ENCODE measurements at regions of chr2 and their contacts with region 1.

Region 1: GRCh38 chr2:84817239-84817655 is 63.6 kb downstream of the TRABD2A start:
- DNase-seq: no peak
- ATAC-seq: no peak
- H3K4me3 ChIP-seq: no peak overlapping the region
- H3K4me3 Mint-ChIP-seq: no peak overlapping the region
- H3K27ac ChIP-seq: no peak overlapping the region
- H3K27ac Mint-ChIP-seq: peak overlapping the region; percentile 53
- H3K4me1 ChIP-seq: peaks cover 52% of the 10 kb centered on the region
- H3K4me1 Mint-ChIP-seq: peaks cover 75% of the 10 kb centered on the region
- H3K27me3 ChIP-seq: no peaks in the 10 kb centered on the region
- H3K27me3 Mint-ChIP-seq: no peaks in the 10 kb centered on the region
- CTCF ChIP-seq: no peak

Region 2: GRCh38 chr2:84832772-84833461 is 15.7 kb after region 1 on chr2:
- CTCF ChIA-PET with region 1: interaction called, 3 read pairs
- POLR2A ChIA-PET with region 1: interaction called, 4 read pairs
- intact Hi-C with region 1: loop called in 1 of 2 experiments (anchors 2 kb)
- DNase-seq: peak in 1 of 9 experiments; percentile 56
- ATAC-seq: peak; percentile 51
- H3K4me3 ChIP-seq: peak overlapping the region in 1 of 2 experiments; percentile 6
- H3K4me3 Mint-ChIP-seq: peak overlapping the region; percentile 79
- H3K27ac ChIP-seq: peak overlapping the region; percentile 7 to 58
- H3K27ac Mint-ChIP-seq: no peak overlapping the region
- H3K4me1 ChIP-seq: peaks cover 90% of the 10 kb centered on the region
- H3K4me1 Mint-ChIP-seq: peaks cover 45% of the 10 kb centered on the region
- H3K27me3 ChIP-seq: peaks cover 0 to 3% of the 10 kb centered on the region in 2 experiments
- H3K27me3 Mint-ChIP-seq: no peaks in the 10 kb centered on the region
- CTCF ChIP-seq: no peak

Region 3: DNA sequence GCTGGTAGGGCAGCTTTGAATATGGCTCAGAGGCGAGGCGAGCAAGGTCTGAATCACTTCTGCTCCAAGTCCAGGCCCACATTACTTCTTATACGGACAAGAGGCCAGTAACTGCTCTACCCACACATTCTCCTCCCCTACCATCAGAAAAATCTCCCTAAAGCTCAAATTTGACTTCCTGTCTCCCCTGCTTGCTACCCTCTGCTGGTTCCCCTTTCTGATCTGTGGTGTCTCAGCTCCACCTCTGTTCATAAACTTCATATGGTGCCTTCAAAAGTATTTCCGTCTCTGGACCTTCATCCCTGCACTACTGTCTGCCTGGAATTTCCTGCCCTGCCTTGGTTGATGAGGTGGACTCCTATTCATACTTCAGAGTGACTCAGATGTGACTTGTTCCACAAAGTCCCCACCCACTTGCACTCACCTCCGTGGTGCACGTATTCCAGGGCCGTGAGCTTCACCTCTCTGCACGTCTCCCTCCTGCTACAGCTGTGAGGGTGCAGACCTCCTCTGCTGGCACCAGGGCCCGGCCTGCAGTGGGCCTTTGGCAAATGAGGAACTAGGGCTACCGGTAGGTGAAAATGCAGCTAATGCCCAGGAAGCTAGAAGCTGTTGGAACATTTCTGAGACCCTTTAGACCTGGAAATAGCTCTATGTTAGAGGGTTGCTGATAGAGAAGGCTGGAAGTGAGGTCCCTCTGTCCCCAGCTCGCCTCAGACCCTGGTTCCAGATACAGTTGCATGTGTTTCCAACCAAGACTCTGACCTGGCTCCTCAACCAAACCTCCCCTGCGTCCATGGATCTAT is 129.2 kb after region 1 on chr2:
- CTCF ChIA-PET with region 1: no interaction called
- POLR2A ChIA-PET with region 1: no interaction called
- intact Hi-C with region 1: no loop called
- DNase-seq: peak in 8 of 9 experiments; percentile 30 to 81 (median 62)
- ATAC-seq: peak; percentile 87
- H3K4me3 ChIP-seq: peak overlapping the region; percentile 20 to 27
- H3K4me3 Mint-ChIP-seq: peak overlapping the region; percentile 75
- H3K27ac ChIP-seq: peak overlapping the region; percentile 1 to 76
- H3K27ac Mint-ChIP-seq: peak overlapping the region; percentile 90
- H3K4me1 ChIP-seq: peaks cover 22% of the 10 kb centered on the region
- H3K4me1 Mint-ChIP-seq: peaks cover 24% of the 10 kb centered on the region
- H3K27me3 ChIP-seq: no peaks in the 10 kb centered on the region
- H3K27me3 Mint-ChIP-seq: no peaks in the 10 kb centered on the region
- CTCF ChIP-seq: no peak

Region 4: GRCh38 chr2:84991404-84992151 is 174.3 kb after region 1 on chr2:
- CTCF ChIA-PET with region 1: no interaction called
- POLR2A ChIA-PET with region 1: no interaction called
- intact Hi-C with region 1: no loop called
- DNase-seq: no peak
- ATAC-seq: no peak
- H3K4me3 ChIP-seq: no peak overlapping the region
- H3K4me3 Mint-ChIP-seq: no peak overlapping the region
- H3K27ac ChIP-seq: no peak overlapping the region
- H3K27ac Mint-ChIP-seq: no peak overlapping the region
- H3K4me1 ChIP-seq: peaks cover 43% of the 10 kb centered on the region
- H3K4me1 Mint-ChIP-seq: peaks cover 46% of the 10 kb centered on the region
- H3K27me3 ChIP-seq: no peaks in the 10 kb centered on the region
- H3K27me3 Mint-ChIP-seq: no peaks in the 10 kb centered on the region
- CTCF ChIP-seq: no peak